ENCODE measurements at regions of chr5 and their contacts with region 1.

Region 1: GRCh38 chr5:139439013-139439903 is at the start of gene DNAJC18:
- DNase-seq: no peak
- H3K4me3 ChIP-seq: peak within 1 kb of the TSS; percentile 69
- H3K27me3 ChIP-seq: no peaks in the 10 kb centered on the region
- CTCF ChIP-seq: no peak
- polyA plus RNA-seq, gene DNAJC18: 5.2 and 9.3 TPM in 2 replicates

Region 2: DNA sequence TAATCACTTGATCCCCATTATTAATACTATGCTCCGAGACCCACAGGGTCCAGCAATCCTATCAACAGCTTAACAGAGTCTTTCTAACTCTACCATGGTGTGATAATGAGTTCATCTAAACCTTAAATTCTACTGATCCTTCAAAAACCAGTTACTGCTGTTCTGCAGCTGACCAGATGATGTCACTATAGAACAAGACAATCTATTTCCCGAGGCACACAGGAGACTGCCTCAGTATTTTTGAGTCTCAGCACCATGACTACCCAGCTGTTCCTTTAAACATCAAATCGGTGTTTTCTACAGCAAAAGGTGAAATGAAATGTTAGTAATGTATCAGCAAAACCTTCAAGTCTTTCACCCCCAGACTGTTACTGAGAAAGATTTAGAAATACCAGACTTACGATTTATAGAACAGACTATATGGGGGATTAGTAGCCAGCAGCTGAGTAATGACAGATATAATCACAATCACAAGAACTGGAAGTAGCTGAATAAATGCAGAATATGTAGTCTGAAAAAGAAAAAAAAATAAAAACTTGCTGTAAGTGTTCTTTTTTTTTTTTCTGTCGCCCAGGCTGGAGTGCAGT is 16.9 kb before region 1 on chr5:
- CTCF ChIA-PET with region 1: interaction called, 21 read pairs
- POLR2A ChIA-PET with region 1: no interaction called
- DNase-seq: no peak
- H3K4me3 ChIP-seq: no peak overlapping the region
- H3K27me3 ChIP-seq: no peaks in the 10 kb centered on the region
- CTCF ChIP-seq: peak; percentile 84

Region 3: GRCh38 chr5:139495638-139496435 is 56.6 kb after region 1 on chr5:
- CTCF ChIA-PET with region 1: interaction called, 4 read pairs
- POLR2A ChIA-PET with region 1: interaction called, 11 read pairs
- DNase-seq: no peak
- H3K4me3 ChIP-seq: no peak overlapping the region
- H3K27me3 ChIP-seq: no peaks in the 10 kb centered on the region
- CTCF ChIP-seq: no peak